OCI-LY7 (cell line): ENCODE measurements at regions of chr12 and their contacts with region 1.

Region 1: GRCh38 chr12:101919447-101919846 is 42.1 kb downstream of the DRAM1 start:
- DNase-seq: no peak
- H3K4me3 ChIP-seq: no peak overlapping the region
- H3K27ac ChIP-seq: no peak overlapping the region
- H3K4me1 ChIP-seq: peaks cover 11% of the 10 kb centered on the region
- CTCF ChIP-seq: no peak

Region 2: GRCh38 chr12:101414533-101415119 is 504.8 kb before region 1 on chr12:
- CTCF ChIA-PET with region 1: no interaction called
- POLR2A ChIA-PET with region 1: no interaction called
- intact Hi-C with region 1: loop called (anchors 2 kb)
- DNase-seq: peak; percentile 73
- H3K4me3 ChIP-seq: no peak overlapping the region
- H3K27ac ChIP-seq: no peak overlapping the region
- H3K4me1 ChIP-seq: peaks cover 4% of the 10 kb centered on the region
- CTCF ChIP-seq: peak; percentile 93

Region 3: GRCh38 chr12:102061560-102062418 is 142.3 kb after region 1 on chr12 and contains the start of gene WASHC3:
- CTCF ChIA-PET with region 1: no interaction called
- POLR2A ChIA-PET with region 1: no interaction called
- intact Hi-C with region 1: loop called (anchors 5 kb)
- DNase-seq: peak; percentile 94
- H3K4me3 ChIP-seq: peak within 1 kb of the TSS; percentile 90
- H3K27ac ChIP-seq: peak within 1 kb of the TSS; percentile 34
- H3K4me1 ChIP-seq: peaks cover 6% of the 10 kb centered on the region
- CTCF ChIP-seq: no peak
- total RNA-seq, gene WASHC3: 28.4 and 29.2 TPM in 2 replicates

Region 4: GRCh38 chr12:102300824-102301461 is 381.5 kb after region 1 on chr12:
- CTCF ChIA-PET with region 1: no interaction called
- POLR2A ChIA-PET with region 1: no interaction called
- intact Hi-C with region 1: loop called (anchors 5 kb)
- DNase-seq: peak; percentile 35
- H3K4me3 ChIP-seq: no peak overlapping the region
- H3K27ac ChIP-seq: no peak overlapping the region
- H3K4me1 ChIP-seq: no peaks in the 10 kb centered on the region
- CTCF ChIP-seq: peak; percentile 73

Region 5: DNA sequence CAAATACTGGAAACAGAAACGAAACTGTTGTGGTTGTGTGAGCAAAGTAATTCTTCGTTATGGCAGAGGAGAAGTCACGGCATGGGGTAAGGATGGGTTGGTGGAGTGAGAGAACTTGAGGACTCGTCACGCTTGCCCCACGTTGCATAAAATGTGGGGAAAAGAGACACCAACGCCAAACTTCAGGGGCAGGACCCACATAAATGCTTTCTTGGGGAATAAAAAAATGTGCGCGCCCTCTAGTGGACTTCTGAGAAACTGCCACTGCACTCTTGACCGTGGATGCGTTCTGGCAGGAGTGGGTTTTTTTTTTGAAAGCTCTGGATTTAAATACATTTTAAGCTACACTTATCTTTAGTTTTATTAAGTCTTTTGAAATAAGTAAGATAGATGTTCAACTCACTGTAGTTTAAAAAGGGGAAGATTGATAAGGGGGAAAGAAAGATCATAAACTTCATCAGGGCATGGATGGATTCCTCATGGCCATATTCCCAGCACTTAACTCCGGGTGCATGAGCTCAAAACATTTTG is 565.0 kb after region 1 on chr12:
- CTCF ChIA-PET with region 1: no interaction called
- POLR2A ChIA-PET with region 1: no interaction called
- intact Hi-C with region 1: loop called (anchors 2 kb)
- DNase-seq: peak; percentile 59
- H3K4me3 ChIP-seq: no peak overlapping the region
- H3K27ac ChIP-seq: no peak overlapping the region
- H3K4me1 ChIP-seq: peaks cover 12% of the 10 kb centered on the region
- CTCF ChIP-seq: peak; percentile 96

Region 6: DNA sequence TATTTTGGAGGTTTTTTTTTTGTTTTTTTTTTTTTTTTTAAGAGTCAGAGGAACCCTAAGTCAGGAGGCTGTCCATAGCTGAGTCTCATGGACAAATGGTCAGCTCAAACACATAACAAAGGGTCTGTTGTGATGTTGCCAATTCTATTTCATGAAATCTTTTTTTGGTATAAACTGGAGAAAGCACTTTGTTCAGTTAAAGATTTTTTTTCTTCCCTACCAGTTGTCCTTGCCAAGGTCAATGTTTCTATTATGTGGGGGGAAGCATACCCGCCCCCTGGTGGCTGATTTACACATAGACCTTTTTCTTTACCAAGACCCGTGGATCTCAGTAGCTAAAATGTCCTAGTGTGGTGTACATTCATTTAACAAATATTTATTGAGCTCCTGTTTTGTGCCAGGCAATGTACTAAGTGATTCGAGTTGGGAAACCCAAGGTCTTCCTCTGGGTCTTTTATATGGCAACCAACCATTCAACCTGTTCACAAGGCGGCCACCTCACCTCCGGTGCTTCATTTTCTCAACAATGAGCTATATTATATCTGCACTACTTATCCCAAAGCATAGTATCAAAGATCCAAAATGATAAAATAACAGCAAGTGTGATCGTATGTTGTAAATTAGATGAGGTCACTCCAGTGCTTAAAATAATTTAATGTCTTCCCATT is 783.1 kb after region 1 on chr12:
- CTCF ChIA-PET with region 1: no interaction called
- POLR2A ChIA-PET with region 1: no interaction called
- intact Hi-C with region 1: loop called (anchors 1 kb)
- DNase-seq: peak; percentile 50
- H3K4me3 ChIP-seq: no peak overlapping the region
- H3K27ac ChIP-seq: no peak overlapping the region
- H3K4me1 ChIP-seq: no peaks in the 10 kb centered on the region
- CTCF ChIP-seq: peak; percentile 88

Region 7: DNA sequence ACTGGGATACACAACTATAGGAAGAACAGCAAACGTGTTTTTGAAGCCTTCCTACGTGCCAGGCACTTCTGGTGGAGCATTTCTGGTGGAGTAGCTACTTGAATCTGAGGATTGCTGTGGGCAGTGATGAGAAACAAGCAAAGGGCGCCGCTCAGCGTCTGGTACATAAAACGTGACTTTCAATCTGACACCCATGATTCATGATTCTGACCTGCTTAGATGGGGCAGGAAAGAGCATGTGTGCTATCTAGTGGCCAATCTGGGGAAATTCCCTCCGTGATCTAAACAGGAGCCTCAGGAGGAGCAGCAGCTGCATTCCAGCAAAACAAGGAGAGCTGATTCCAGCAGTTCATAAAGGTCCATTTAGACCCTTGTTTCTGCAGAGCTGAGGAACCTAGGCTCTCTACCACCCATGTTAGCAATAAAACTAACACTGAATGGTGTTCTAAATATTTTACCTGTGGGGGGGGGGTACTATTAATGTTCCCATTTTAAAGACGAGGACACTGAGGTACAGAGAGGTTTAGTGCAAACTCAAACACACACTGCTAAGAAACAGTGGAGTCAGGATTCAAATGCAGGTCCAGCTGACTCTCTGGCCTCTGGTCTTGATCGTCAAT is 959.8 kb after region 1 on chr12:
- CTCF ChIA-PET with region 1: no interaction called
- POLR2A ChIA-PET with region 1: no interaction called
- intact Hi-C with region 1: loop called (anchors 5 kb)
- DNase-seq: peak; percentile 52
- H3K4me3 ChIP-seq: no peak overlapping the region
- H3K27ac ChIP-seq: no peak overlapping the region
- H3K4me1 ChIP-seq: no peaks in the 10 kb centered on the region
- CTCF ChIP-seq: peak; percentile 75